Right cardiac atrium (tissue), 5 donors: ENCODE measurements at regions of chr15 and their contacts with region 1.

Region 1: GRCh38 chr15:63544258-63545026 is 40.0 kb downstream of the USP3 start:
- DNase-seq: no peak
- ATAC-seq: no peak
- H3K4me3 ChIP-seq: no peak overlapping the region
- H3K27ac ChIP-seq: no peak overlapping the region
- H3K4me1 ChIP-seq: no peaks in the 10 kb centered on the region
- H3K27me3 ChIP-seq: no peaks in the 10 kb centered on the region

Region 2: GRCh38 chr15:63402498-63403253 is 141.8 kb before region 1 on chr15:
- intact Hi-C with region 1: no loop called
- DNase-seq: no peak
- ATAC-seq: peak; percentile 41 to 52
- H3K4me3 ChIP-seq: no peak overlapping the region
- H3K27ac ChIP-seq: no peak overlapping the region
- H3K4me1 ChIP-seq: no peaks in the 10 kb centered on the region
- H3K27me3 ChIP-seq: no peaks in the 10 kb centered on the region

Region 3: DNA sequence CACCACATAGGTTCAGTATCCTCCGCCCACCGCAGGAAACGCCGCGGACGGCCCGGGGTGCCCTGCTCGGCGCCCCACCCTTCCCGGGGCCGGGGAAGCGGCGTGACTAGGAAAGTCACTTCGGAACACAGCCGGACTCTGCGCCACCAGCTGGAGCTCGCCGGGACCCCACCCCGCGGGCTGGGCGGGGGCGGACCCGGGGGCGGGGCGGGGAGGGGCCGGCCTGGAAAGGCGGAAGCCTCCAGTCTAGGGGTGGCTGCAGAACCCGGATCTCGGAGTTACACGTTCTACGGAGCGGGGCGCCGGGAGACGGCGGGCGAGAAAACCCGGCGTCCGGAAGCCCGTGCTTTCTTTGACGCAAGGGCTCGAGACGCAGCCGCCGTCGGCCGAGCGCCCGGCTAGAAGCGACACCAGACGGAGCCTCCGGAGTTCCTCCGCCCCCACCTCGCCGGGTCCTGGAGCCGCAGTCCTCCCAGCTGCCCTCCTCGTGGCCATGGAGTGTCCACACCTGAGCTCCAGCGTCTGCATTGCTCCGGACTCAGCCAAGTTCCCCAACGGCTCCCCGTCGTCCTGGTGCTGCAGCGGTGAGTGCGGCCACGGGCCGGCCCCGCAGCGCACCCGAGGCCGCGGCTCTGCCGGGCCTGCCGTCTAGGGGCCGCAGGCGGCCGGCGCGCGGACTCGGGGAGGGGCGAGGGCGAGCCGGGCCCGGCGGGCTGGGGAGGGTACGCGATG is 40.0 kb before region 1 on chr15 and contains the start of gene USP3:
- intact Hi-C with region 1: loop called in 1 of 4 experiments (anchors 5 kb)
- DNase-seq: peak; percentile 95 to 98 (median 98)
- ATAC-seq: peak; percentile 94 to 95
- H3K4me3 ChIP-seq: peak within 1 kb of the TSS; percentile 83
- H3K27ac ChIP-seq: peak within 1 kb of the TSS; percentile 98
- H3K4me1 ChIP-seq: peaks cover 6% of the 10 kb centered on the region
- H3K27me3 ChIP-seq: no peaks in the 10 kb centered on the region
- total RNA-seq, gene USP3: 17.6 to 26.0 (median 21.2) TPM